Mammary epithelial cell (primary cell): ENCODE measurements at regions of chr6 and their contacts with region 1.

Region 1: GRCh38 chr6:52263709-52264540 is 19.6 kb upstream of the IL17F start:
- DNase-seq: peak; percentile 33
- H3K4me3 ChIP-seq: no peak overlapping the region
- H3K27ac ChIP-seq: no peak overlapping the region
- H3K4me1 ChIP-seq: no peaks in the 10 kb centered on the region
- H3K27me3 ChIP-seq: no peaks in the 10 kb centered on the region
- CTCF ChIP-seq: peak; percentile 94 to 99

Region 2: DNA sequence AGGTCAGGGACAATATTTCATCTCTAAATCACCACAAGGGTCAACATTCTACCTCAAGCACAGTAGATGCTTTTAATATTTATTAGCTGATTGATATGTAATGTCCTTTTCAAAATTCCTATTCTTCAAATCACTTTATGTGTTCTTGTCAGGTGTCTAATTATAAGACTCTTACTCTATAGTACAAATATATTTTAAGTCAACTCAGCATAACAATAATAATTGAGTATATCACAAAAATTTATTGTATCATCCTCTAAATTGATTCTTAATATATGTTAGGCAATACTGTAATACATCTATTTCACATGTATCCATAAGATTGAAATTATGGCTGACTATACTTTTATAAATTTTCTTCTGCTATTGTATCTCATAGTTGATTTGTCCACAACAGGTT is 600.4 kb before region 1 on chr6:
- CTCF ChIA-PET with region 1: no interaction called
- dilution Hi-C with region 1: no loop called
- in situ Hi-C with region 1: no loop called
- intact Hi-C with region 1: no loop called
- DNase-seq: no peak
- H3K4me3 ChIP-seq: no peak overlapping the region
- H3K27ac ChIP-seq: no peak overlapping the region
- H3K4me1 ChIP-seq: no peaks in the 10 kb centered on the region
- H3K27me3 ChIP-seq: no peaks in the 10 kb centered on the region
- CTCF ChIP-seq: no peak

Region 3: DNA sequence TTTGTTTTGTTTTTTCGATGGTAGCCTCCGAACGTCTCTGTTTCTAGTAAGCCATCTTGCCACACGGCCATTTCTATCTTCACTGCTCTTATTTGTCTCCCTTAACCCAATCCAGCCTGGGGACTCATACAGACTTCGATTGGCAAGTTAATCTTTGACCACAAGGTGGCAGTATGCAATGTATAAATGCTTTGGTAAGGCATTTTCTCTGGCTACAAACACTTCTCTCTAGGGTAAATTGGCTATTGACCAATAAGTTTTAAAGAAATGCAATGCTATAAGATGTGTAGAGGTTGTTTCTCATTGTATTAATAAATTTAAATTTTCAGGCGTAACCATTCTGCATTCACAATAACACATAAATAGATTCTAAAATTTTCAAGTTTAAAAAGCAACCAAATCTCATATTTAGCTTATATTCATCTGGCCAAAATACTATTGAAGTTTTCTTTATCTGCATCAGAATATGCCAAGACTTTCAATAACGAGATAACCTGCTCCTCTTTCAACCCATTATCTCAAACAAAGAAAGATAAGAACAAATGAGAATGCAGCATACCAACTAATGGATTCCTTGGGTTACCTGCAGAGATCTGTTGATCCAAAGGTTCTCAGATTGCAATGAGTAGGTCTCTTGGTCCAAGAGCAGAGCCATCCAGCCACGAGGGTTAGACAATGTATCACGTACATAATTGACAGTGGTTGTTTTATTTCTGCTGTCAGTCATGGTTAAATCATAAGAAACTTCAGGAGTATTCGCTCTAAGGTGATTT is 408.4 kb before region 1 on chr6:
- CTCF ChIA-PET with region 1: no interaction called
- dilution Hi-C with region 1: no loop called
- in situ Hi-C with region 1: no loop called
- intact Hi-C with region 1: loop called (anchors 5 kb)
- DNase-seq: peak; percentile 41
- H3K4me3 ChIP-seq: no peak overlapping the region
- H3K27ac ChIP-seq: no peak overlapping the region
- H3K4me1 ChIP-seq: no peaks in the 10 kb centered on the region
- H3K27me3 ChIP-seq: peaks cover 2% of the 10 kb centered on the region
- CTCF ChIP-seq: peak; percentile 61 to 67

Region 4: GRCh38 chr6:52063584-52064344 is 200.2 kb before region 1 on chr6:
- CTCF ChIA-PET with region 1: no interaction called
- dilution Hi-C with region 1: no loop called
- in situ Hi-C with region 1: no loop called
- intact Hi-C with region 1: loop called (anchors 1 kb)
- DNase-seq: peak; percentile 57
- H3K4me3 ChIP-seq: no peak overlapping the region
- H3K27ac ChIP-seq: peak overlapping the region; percentile 65
- H3K4me1 ChIP-seq: peaks cover 33% of the 10 kb centered on the region
- H3K27me3 ChIP-seq: no peaks in the 10 kb centered on the region
- CTCF ChIP-seq: peak; percentile 77

Region 5: DNA sequence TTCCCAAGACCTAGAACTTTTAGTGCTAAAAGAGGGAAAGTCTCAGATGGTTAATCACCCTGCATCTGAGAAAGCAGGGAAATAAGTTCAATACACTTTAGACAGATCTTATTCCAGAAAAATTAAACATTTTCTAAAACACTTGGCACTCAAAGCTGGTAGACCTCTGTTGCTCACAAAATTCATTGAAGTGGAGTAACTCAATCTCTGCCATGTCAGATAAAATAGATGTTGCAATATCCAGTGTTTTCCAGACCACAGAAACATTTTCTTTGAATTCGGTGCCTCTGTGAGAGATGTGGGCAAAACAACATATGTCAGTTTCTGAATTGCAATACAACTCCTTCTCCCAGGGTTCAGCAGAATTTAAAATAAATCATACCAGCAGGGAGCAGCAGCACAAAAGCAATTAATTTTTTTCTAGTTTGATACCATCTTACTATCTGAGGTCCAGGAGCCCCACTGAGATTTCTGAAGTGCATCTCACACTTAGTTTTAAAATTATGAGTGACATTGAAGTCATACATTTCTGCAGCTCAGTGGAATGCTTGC is 165.2 kb before region 1 on chr6:
- CTCF ChIA-PET with region 1: no interaction called
- dilution Hi-C with region 1: no loop called
- in situ Hi-C with region 1: no loop called
- intact Hi-C with region 1: loop called (anchors 2 kb)
- DNase-seq: no peak
- H3K4me3 ChIP-seq: no peak overlapping the region
- H3K27ac ChIP-seq: no peak overlapping the region
- H3K4me1 ChIP-seq: peaks cover 7% of the 10 kb centered on the region
- H3K27me3 ChIP-seq: no peaks in the 10 kb centered on the region
- CTCF ChIP-seq: no peak

Region 6: DNA sequence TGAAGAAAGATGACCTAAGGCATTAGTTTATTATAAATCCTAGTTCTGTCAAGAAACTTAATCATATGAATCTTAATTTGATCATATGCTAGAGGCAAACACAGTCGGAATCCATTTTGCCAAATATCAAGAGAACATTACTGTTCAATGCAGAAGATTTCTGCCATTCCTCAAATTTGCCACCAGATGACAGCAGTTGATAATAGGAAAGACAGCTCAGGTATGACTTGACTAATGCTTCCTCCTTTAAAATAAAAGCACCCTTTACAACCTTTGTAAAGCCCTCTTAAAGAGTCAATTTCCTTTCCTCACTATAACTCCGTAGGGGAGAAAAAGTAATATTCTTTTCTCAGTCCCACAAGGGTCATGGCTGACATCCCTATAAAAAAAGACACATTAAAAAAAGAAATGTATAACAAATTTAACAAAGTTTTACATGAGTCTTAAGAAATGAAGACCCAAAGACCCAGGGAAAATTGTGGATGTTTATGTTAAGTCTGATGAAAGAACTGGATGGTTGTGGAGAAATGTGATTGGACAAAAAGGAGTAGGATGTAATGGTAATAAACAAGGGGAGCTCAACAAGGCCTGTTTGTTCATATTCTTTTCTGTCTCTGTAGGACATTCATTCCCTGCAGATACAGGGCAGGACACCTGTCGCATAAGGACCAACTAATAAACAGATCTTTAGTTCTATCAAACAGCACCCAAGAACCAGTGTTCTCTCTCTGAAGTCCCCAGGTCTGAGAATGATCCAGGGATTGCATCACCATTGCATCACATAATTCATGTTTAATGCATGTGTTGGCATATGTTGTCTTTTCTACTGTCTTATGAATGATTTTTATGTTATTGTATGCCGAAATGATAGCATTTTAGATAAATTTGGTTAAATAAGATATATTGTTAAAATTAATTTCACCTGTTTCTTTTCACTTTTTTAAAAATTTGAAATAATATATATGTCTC is 100.7 kb before region 1 on chr6:
- CTCF ChIA-PET with region 1: no interaction called
- dilution Hi-C with region 1: no loop called
- in situ Hi-C with region 1: loop called (anchors 5 to 10 kb)
- intact Hi-C with region 1: loop called (anchors 1 kb)
- DNase-seq: peak; percentile 34
- H3K4me3 ChIP-seq: no peak overlapping the region
- H3K27ac ChIP-seq: no peak overlapping the region
- H3K4me1 ChIP-seq: peaks cover under 1% of the 10 kb centered on the region
- H3K27me3 ChIP-seq: no peaks in the 10 kb centered on the region
- CTCF ChIP-seq: peak; percentile 93 to 97

Region 7: GRCh38 chr6:52233975-52234823 is 29.7 kb before region 1 on chr6:
- CTCF ChIA-PET with region 1: no interaction called
- dilution Hi-C with region 1: no loop called
- in situ Hi-C with region 1: no loop called
- intact Hi-C with region 1: loop called (anchors 1 kb)
- DNase-seq: peak; percentile 75
- H3K4me3 ChIP-seq: no peak overlapping the region
- H3K27ac ChIP-seq: no peak overlapping the region
- H3K4me1 ChIP-seq: no peaks in the 10 kb centered on the region
- H3K27me3 ChIP-seq: peaks cover 3% of the 10 kb centered on the region
- CTCF ChIP-seq: peak; percentile 67